ENCODE measurements at regions of chr5 and their contacts with region 1.

Region 1: GRCh38 chr5:53834500-53834899 is 274.1 kb downstream of the NDUFS4 start:
- DNase-seq: no peak
- H3K4me3 ChIP-seq: no peak overlapping the region
- H3K27ac ChIP-seq: no peak overlapping the region
- H3K4me1 ChIP-seq: no peaks in the 10 kb centered on the region
- H3K27me3 ChIP-seq: no peaks in the 10 kb centered on the region
- CTCF ChIP-seq: no peak

Region 2: GRCh38 chr5:53792338-53792737 is 42.2 kb before region 1 on chr5:
- intact Hi-C with region 1: loop called (anchors 1 kb)
- DNase-seq: no peak
- H3K4me3 ChIP-seq: no peak overlapping the region
- H3K27ac ChIP-seq: no peak overlapping the region
- H3K4me1 ChIP-seq: no peaks in the 10 kb centered on the region
- H3K27me3 ChIP-seq: no peaks in the 10 kb centered on the region
- CTCF ChIP-seq: no peak